ENCODE measurements at regions of chr21 and their contacts with region 1.

Region 1: DNA sequence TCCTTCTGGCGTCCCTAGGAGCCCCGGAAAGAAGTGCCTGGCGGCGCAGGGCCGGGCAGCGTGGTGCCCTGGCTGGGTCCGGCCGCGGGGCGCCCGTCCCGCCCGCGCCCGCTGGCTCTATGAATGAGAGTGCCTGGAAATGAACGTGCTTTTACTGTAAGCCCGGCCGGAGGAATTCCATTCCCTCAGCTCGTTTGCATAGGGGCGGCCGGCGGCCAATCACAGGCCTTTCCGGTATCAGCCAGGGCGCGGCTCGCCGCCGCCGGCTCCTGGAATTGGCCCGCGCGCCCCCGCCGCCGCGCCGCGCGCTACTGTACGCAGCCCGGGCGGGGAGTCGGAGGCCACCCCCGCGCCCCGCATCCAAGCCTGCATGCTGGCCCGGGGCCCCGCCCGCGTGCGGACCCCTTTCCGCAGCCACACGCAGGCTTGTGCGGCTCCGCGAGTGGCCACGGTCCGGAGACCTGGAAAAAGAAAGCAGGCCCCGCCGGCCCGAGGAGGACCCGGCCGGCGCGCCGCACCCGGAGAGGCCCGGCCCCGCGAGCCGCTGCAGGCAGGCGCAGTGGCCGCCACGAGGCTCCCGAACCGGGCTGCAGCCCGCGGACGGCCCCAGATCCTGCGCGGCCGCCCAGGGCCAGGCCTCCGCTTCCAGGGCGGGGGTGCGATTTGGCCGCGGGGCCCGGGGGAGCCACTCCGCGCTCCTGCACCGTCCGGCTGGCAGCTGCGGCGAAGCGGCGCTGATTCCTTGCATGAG is 160.4 kb downstream of the RUNX1 start:
- DNase-seq: peak; percentile 96
- H3K4me3 Mint-ChIP-seq: peak overlapping the region; percentile 99
- H3K27ac Mint-ChIP-seq: peak overlapping the region; percentile 91
- H3K4me1 Mint-ChIP-seq: peaks cover 4% of the 10 kb centered on the region
- H3K27me3 Mint-ChIP-seq: no peaks in the 10 kb centered on the region
- CTCF ChIP-seq: no peak

Region 2: GRCh38 chr21:34693192-34693810 is 195.4 kb before region 1 on chr21:
- CTCF ChIA-PET with region 1: interaction called, 78 read pairs
- POLR2A ChIA-PET with region 1: interaction called, 79 read pairs
- intact Hi-C with region 1: loop called (anchors 2 kb)
- DNase-seq: peak; percentile 78
- H3K4me3 Mint-ChIP-seq: no peak overlapping the region
- H3K27ac Mint-ChIP-seq: no peak overlapping the region
- H3K4me1 Mint-ChIP-seq: no peaks in the 10 kb centered on the region
- H3K27me3 Mint-ChIP-seq: no peaks in the 10 kb centered on the region
- CTCF ChIP-seq: peak; percentile 77

Region 3: GRCh38 chr21:34771512-34772028 is 117.2 kb before region 1 on chr21:
- CTCF ChIA-PET with region 1: no interaction called
- POLR2A ChIA-PET with region 1: interaction called, 11 read pairs
- intact Hi-C with region 1: no loop called
- DNase-seq: peak; percentile 86
- H3K4me3 Mint-ChIP-seq: no peak overlapping the region
- H3K27ac Mint-ChIP-seq: peak overlapping the region; percentile 89
- H3K4me1 Mint-ChIP-seq: peaks cover 32% of the 10 kb centered on the region
- H3K27me3 Mint-ChIP-seq: no peaks in the 10 kb centered on the region
- CTCF ChIP-seq: no peak

Region 4: GRCh38 chr21:34836103-34836932 is 52.4 kb before region 1 on chr21:
- CTCF ChIA-PET with region 1: interaction called, 5 read pairs
- POLR2A ChIA-PET with region 1: interaction called, 81 read pairs
- intact Hi-C with region 1: no loop called
- DNase-seq: peak; percentile 98
- H3K4me3 Mint-ChIP-seq: peak overlapping the region; percentile 64
- H3K27ac Mint-ChIP-seq: peak overlapping the region; percentile 94
- H3K4me1 Mint-ChIP-seq: peaks cover 31% of the 10 kb centered on the region
- H3K27me3 Mint-ChIP-seq: no peaks in the 10 kb centered on the region
- CTCF ChIP-seq: no peak

Region 5: GRCh38 chr21:34874684-34875513 is 13.8 kb before region 1 on chr21:
- CTCF ChIA-PET with region 1: interaction called, 8 read pairs
- POLR2A ChIA-PET with region 1: interaction called, 414 read pairs
- intact Hi-C with region 1: no loop called
- DNase-seq: no peak
- H3K4me3 Mint-ChIP-seq: no peak overlapping the region
- H3K27ac Mint-ChIP-seq: peak overlapping the region; percentile 97
- H3K4me1 Mint-ChIP-seq: peaks cover 33% of the 10 kb centered on the region
- H3K27me3 Mint-ChIP-seq: no peaks in the 10 kb centered on the region
- CTCF ChIP-seq: no peak

Region 6: GRCh38 chr21:35026617-35027562 is 138.1 kb after region 1 on chr21:
- CTCF ChIA-PET with region 1: no interaction called
- POLR2A ChIA-PET with region 1: no interaction called
- intact Hi-C with region 1: no loop called
- DNase-seq: no peak
- H3K4me3 Mint-ChIP-seq: no peak overlapping the region
- H3K27ac Mint-ChIP-seq: no peak overlapping the region
- H3K4me1 Mint-ChIP-seq: no peaks in the 10 kb centered on the region
- H3K27me3 Mint-ChIP-seq: no peaks in the 10 kb centered on the region
- CTCF ChIP-seq: no peak

Region 7: GRCh38 chr21:35256467-35256988 is 367.8 kb after region 1 on chr21:
- CTCF ChIA-PET with region 1: no interaction called
- POLR2A ChIA-PET with region 1: interaction called, 39 read pairs
- intact Hi-C with region 1: loop called (anchors 10 kb)
- DNase-seq: peak; percentile 99
- H3K4me3 Mint-ChIP-seq: peak overlapping the region; percentile 66
- H3K27ac Mint-ChIP-seq: peak overlapping the region; percentile 89
- H3K4me1 Mint-ChIP-seq: peaks cover 48% of the 10 kb centered on the region
- H3K27me3 Mint-ChIP-seq: no peaks in the 10 kb centered on the region
- CTCF ChIP-seq: no peak

Region 8: DNA sequence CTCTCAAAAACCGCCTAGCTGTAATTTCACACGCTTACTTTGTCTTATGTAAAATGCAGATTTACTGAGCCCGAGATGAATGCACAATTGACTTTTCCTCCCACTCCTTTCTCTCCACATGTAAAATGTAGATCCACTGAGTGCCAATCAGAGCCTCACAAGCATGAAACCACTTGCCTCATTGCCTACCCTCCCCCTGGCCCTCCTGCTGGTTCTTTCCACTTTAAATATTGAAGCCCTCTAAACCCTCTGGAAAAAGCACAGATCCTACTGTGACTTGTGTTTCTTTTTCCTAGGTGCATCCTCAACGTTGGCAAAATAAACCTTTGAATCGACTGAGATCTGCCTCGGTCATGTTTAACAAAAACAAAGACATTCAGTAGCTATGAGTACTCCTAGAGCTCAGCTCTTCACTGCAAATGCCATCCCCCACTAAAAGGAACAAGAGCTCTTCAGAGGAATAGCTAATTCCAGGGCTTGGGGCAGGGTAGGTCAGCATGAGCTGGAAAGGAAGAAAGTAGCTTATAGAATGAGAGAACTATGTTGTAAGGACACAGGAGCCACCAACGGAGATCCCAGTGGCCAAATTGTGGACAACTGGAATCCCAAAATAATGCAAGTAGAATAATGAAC is 525.9 kb after region 1 on chr21:
- CTCF ChIA-PET with region 1: no interaction called
- POLR2A ChIA-PET with region 1: no interaction called
- intact Hi-C with region 1: no loop called
- DNase-seq: no peak
- H3K4me3 Mint-ChIP-seq: no peak overlapping the region
- H3K27ac Mint-ChIP-seq: no peak overlapping the region
- H3K4me1 Mint-ChIP-seq: no peaks in the 10 kb centered on the region
- H3K27me3 Mint-ChIP-seq: peaks cover 36% of the 10 kb centered on the region
- CTCF ChIP-seq: no peak

Region 9: GRCh38 chr21:35840197-35840799 is 951.6 kb after region 1 on chr21:
- CTCF ChIA-PET with region 1: interaction called, 7 read pairs
- POLR2A ChIA-PET with region 1: interaction called, 9 read pairs
- intact Hi-C with region 1: loop called (anchors 1 kb)
- DNase-seq: peak; percentile 72
- H3K4me3 Mint-ChIP-seq: no peak overlapping the region
- H3K27ac Mint-ChIP-seq: no peak overlapping the region
- H3K4me1 Mint-ChIP-seq: no peaks in the 10 kb centered on the region
- H3K27me3 Mint-ChIP-seq: no peaks in the 10 kb centered on the region
- CTCF ChIP-seq: peak; percentile 78